Dendritic cell treated with granulocyte-macrophage colony-stimulating factor and Interleukin-4, amounts not matched to agents 40 ng/mL and 50 ng/mL, for 4 days (primary cell): ENCODE measurements at regions of chr17 and their contacts with region 1.

Region 1: DNA sequence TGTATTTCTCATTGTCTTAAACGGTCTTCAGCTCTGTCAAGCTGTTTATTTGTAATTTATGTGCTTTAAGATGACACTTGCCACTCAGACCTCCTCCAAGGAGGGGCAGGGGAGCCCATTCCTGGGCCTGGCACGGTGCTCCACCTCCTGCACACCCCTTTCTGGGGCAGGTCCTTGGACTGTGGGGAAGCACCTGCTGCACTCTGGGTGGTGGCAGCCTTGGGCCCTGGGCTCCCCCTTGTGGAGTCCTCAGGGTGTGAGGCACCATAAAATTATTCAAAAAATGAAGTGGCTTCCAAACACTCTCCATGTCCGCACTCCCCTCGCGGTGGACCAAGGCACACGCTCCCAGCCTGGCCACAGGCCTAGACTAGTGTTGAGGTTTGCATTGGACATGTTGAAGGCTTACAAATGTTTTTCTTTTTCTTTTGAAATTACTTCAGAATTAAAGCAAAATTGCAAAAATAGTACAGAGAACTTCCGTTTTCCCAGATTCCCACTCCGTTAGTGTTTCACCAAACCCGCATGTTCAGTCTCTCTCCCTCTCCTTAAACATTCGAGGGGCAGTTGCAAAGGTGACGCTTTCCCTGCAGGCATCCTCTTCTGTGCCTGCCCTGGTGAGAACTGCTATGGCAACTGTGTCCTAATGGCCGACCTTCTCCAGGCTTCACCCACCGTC is 32.4 kb downstream of the FOXK2 start:
- H3K4me3 Mint-ChIP-seq: no peak overlapping the region
- H3K27ac Mint-ChIP-seq: no peak overlapping the region
- H3K4me1 Mint-ChIP-seq: peaks cover 65% of the 10 kb centered on the region
- H3K27me3 Mint-ChIP-seq: no peaks in the 10 kb centered on the region

Region 2: GRCh38 chr17:82300707-82301270 is 251.1 kb before region 1 on chr17:
- intact Hi-C with region 1: no loop called
- H3K4me3 Mint-ChIP-seq: no peak overlapping the region
- H3K27ac Mint-ChIP-seq: peak overlapping the region; percentile 63
- H3K4me1 Mint-ChIP-seq: peaks cover 65% of the 10 kb centered on the region
- H3K27me3 Mint-ChIP-seq: peaks cover 66% of the 10 kb centered on the region

Region 3: DNA sequence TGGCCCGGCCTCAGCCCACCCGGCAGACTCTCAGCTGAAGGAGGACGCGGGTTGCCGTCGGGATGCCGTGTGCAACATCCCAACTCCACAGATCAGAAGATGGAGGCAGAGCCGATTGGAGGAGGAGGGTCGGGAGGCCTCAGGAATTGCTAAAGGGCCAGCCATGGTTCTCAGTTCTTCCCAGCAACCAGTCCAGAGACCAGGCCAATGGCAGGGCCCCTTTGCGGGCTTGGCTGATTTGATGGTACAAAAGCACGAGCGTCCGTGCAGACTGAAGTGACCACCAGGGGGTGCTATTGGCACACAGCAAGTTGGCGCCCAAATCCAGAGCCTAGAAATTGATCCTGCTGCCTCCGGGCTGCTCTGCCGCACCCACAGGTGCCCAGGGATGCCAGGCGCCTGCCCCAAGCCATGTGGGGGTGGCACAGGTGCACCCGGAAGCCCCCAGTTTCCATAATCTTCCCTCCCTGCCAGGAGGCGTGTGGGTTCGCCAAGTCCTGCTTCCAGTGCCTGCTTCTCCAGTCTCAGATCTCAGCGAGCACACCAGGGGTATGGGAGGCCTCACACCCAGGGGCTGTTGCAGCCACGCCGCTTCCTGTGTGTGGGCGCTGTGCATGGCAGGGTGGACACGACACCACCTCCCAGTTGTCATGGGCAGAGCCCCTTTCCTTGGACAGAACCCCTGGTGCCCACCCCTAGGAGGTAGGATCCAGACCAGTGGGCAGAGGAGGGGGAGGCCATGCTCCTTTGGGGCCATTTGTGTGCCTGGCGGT is 200.0 kb before region 1 on chr17:
- intact Hi-C with region 1: loop called (anchors 5 kb)
- H3K4me3 Mint-ChIP-seq: no peak overlapping the region
- H3K27ac Mint-ChIP-seq: no peak overlapping the region
- H3K4me1 Mint-ChIP-seq: peaks cover 10% of the 10 kb centered on the region
- H3K27me3 Mint-ChIP-seq: peaks cover 58% of the 10 kb centered on the region

Region 4: GRCh38 chr17:82483836-82484235 is 68.1 kb before region 1 on chr17:
- intact Hi-C with region 1: loop called (anchors 5 kb)
- H3K4me3 Mint-ChIP-seq: no peak overlapping the region
- H3K27ac Mint-ChIP-seq: no peak overlapping the region
- H3K4me1 Mint-ChIP-seq: peaks cover 5% of the 10 kb centered on the region
- H3K27me3 Mint-ChIP-seq: no peaks in the 10 kb centered on the region

Region 5: DNA sequence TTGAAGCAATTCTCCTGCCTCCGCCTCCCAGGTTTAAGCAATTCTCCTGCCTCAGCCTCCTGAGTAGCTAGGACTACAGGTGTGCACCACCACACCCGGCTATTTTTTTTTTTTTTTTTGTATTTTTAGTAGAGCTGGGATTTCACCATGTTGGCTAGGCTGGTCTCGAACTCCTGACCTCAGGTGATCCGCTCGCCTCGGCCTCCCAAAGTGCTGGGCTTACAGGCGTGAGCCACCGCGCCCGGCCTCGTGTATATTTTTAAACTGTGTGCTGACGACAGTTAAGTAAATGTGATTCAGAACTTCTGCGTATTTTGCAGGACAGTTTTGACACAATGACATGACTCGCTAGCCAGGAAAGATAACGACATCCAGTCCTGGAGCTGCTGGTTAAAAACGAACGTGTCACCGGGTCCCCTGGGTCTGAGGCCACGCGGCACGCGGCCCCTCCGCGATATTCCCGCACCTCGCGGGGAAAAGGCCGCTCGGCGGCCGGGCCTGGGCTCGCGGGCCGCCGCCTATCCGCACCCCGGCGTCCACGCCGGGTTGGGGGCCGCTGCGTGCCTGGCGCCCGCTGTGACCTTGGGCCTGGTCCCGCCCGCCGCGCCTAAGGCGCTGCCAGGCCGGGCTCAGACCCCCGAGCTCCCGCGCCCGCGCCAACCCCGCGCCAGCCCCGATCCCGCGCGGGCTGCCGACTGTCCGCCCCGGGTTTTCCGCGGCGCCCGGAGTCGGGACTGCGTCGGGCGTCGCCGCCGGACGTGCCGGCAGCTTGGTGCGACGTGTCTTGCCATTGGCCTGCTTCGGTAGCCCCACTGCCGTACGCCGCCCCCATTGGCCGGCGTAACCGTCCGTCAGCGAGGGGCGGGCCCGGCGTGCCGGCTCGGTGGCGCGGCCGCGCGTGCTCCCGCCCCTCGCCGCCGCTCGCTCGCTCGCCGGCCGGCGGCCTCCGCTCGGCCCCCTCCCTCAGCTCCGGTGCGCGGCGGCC is 32.8 kb before region 1 on chr17 and contains the start of gene FOXK2:
- intact Hi-C with region 1: loop called (anchors 5 kb)
- H3K4me3 Mint-ChIP-seq: peak within 1 kb of the TSS; percentile 84
- H3K27ac Mint-ChIP-seq: peak within 1 kb of the TSS; percentile 81
- H3K4me1 Mint-ChIP-seq: peaks cover 28% of the 10 kb centered on the region
- H3K27me3 Mint-ChIP-seq: no peaks in the 10 kb centered on the region